ENCODE measurements at regions of chr1 and their contacts with region 1.

Region 1: DNA sequence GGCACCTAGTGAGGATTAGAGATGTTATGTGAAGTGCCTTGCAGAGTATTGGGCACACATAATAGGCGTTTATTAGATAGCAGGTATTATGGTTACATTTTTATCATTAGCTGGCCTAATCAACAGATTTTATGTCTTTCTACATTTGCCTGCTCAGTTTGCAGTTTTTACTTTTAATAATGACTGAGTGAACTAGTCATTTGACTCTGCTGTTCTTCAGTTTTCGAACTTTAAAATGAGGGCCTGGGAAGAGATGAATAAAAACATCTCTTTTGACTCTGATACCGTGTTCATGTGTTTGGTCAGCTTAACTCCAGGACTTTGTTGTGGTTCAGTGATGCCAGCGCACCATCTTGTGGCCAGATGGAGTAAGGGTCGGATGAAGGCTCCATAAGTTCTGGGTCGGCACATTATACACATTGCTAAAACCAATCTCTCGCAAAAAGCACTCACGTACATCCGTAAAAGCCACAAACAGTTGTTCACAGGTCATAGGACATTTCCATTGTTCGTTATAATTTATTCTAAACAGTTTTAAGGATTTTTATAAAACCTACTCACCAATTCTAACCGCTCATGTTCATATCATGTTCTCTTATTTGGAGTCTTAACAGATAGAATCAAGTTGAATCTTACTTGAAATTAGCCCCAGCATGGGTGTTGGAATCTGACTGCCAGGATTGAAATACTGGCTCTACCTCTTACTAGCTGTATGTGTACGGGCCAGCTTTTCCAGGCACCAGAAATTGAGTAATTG is 78.4 kb upstream of the GPR88 start:
- DNase-seq: peak; percentile 42 to 85 (median 61)
- ATAC-seq: peak; percentile 69
- H3K4me3 ChIP-seq: no peak overlapping the region
- H3K4me3 Mint-ChIP-seq: peak overlapping the region; percentile 8
- H3K27ac ChIP-seq: no peak overlapping the region
- H3K27ac Mint-ChIP-seq: peak overlapping the region; percentile 29
- H3K4me1 ChIP-seq: peaks cover 17% of the 10 kb centered on the region
- H3K4me1 Mint-ChIP-seq: peaks cover 55% of the 10 kb centered on the region
- H3K27me3 ChIP-seq: no peaks in the 10 kb centered on the region
- H3K27me3 Mint-ChIP-seq: no peaks in the 10 kb centered on the region
- CTCF ChIP-seq: peak; percentile 57

Region 2: GRCh38 chr1:99808391-99809115 is 651.0 kb before region 1 on chr1:
- CTCF ChIA-PET with region 1: interaction called, 3 read pairs
- POLR2A ChIA-PET with region 1: no interaction called
- intact Hi-C with region 1: loop called (anchors 2 to 5 kb)
- DNase-seq: peak in 4 of 9 experiments; percentile 15 to 81 (median 54)
- ATAC-seq: peak; percentile 79
- H3K4me3 ChIP-seq: no peak overlapping the region
- H3K4me3 Mint-ChIP-seq: no peak overlapping the region
- H3K27ac ChIP-seq: no peak overlapping the region
- H3K27ac Mint-ChIP-seq: no peak overlapping the region
- H3K4me1 ChIP-seq: no peaks in the 10 kb centered on the region
- H3K4me1 Mint-ChIP-seq: peaks cover 4% of the 10 kb centered on the region
- H3K27me3 ChIP-seq: peaks cover 0 to 2% of the 10 kb centered on the region in 2 experiments
- H3K27me3 Mint-ChIP-seq: peaks cover 3% of the 10 kb centered on the region
- CTCF ChIP-seq: peak; percentile 85

Region 3: GRCh38 chr1:100229681-100230443 is 229.7 kb before region 1 on chr1:
- CTCF ChIA-PET with region 1: interaction called, 3 read pairs
- POLR2A ChIA-PET with region 1: no interaction called
- intact Hi-C with region 1: loop called in 1 of 2 experiments (anchors 5 kb)
- DNase-seq: no peak
- ATAC-seq: no peak
- H3K4me3 ChIP-seq: no peak overlapping the region
- H3K4me3 Mint-ChIP-seq: no peak overlapping the region
- H3K27ac ChIP-seq: no peak overlapping the region
- H3K27ac Mint-ChIP-seq: no peak overlapping the region
- H3K4me1 ChIP-seq: no peaks in the 10 kb centered on the region
- H3K4me1 Mint-ChIP-seq: peaks cover 2% of the 10 kb centered on the region
- H3K27me3 ChIP-seq: no peaks in the 10 kb centered on the region
- H3K27me3 Mint-ChIP-seq: no peaks in the 10 kb centered on the region
- CTCF ChIP-seq: no peak

Region 4: GRCh38 chr1:100292711-100293110 is 166.8 kb before region 1 on chr1:
- CTCF ChIA-PET with region 1: interaction called, 15 read pairs
- POLR2A ChIA-PET with region 1: no interaction called
- intact Hi-C with region 1: loop called in 1 of 2 experiments (anchors 5 kb)
- DNase-seq: no peak
- ATAC-seq: no peak
- H3K4me3 ChIP-seq: no peak overlapping the region
- H3K4me3 Mint-ChIP-seq: no peak overlapping the region
- H3K27ac ChIP-seq: no peak overlapping the region
- H3K27ac Mint-ChIP-seq: peak overlapping the region; percentile 3
- H3K4me1 ChIP-seq: no peaks in the 10 kb centered on the region
- H3K4me1 Mint-ChIP-seq: no peaks in the 10 kb centered on the region
- H3K27me3 ChIP-seq: no peaks in the 10 kb centered on the region
- H3K27me3 Mint-ChIP-seq: no peaks in the 10 kb centered on the region
- CTCF ChIP-seq: no peak

Region 5: DNA sequence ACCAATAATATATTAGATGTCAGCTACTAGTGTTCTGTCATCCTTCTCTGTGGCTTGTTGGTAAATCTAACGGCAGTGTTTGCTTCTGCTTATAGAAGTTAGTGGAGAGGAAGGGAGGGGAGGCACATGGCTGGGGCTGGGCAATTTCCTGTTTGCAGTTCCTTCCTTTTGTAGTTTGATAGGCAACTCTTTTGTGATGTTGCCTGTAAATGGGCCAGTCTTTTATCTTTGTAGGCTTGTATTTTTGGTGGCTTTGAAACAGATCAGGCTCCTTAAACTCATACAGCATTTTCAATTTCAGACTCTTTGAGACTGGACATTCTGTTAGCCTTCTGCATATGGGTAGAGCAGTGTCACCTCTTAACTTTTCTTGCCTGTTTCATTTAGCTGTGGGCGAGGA is 59.1 kb before region 1 on chr1:
- CTCF ChIA-PET with region 1: interaction called, 16 read pairs
- POLR2A ChIA-PET with region 1: interaction called, 3 read pairs
- intact Hi-C with region 1: loop called in 1 of 2 experiments (anchors 2 kb)
- DNase-seq: peak; percentile 39 to 90 (median 66)
- ATAC-seq: peak; percentile 82
- H3K4me3 ChIP-seq: peak overlapping the region; percentile 13 to 19
- H3K4me3 Mint-ChIP-seq: peak overlapping the region; percentile 73
- H3K27ac ChIP-seq: peak overlapping the region; percentile 59 to 80
- H3K27ac Mint-ChIP-seq: peak overlapping the region; percentile 92
- H3K4me1 ChIP-seq: peaks cover 93% of the 10 kb centered on the region
- H3K4me1 Mint-ChIP-seq: peaks cover 86% of the 10 kb centered on the region
- H3K27me3 ChIP-seq: no peaks in the 10 kb centered on the region
- H3K27me3 Mint-ChIP-seq: no peaks in the 10 kb centered on the region
- CTCF ChIP-seq: no peak

Region 6: DNA sequence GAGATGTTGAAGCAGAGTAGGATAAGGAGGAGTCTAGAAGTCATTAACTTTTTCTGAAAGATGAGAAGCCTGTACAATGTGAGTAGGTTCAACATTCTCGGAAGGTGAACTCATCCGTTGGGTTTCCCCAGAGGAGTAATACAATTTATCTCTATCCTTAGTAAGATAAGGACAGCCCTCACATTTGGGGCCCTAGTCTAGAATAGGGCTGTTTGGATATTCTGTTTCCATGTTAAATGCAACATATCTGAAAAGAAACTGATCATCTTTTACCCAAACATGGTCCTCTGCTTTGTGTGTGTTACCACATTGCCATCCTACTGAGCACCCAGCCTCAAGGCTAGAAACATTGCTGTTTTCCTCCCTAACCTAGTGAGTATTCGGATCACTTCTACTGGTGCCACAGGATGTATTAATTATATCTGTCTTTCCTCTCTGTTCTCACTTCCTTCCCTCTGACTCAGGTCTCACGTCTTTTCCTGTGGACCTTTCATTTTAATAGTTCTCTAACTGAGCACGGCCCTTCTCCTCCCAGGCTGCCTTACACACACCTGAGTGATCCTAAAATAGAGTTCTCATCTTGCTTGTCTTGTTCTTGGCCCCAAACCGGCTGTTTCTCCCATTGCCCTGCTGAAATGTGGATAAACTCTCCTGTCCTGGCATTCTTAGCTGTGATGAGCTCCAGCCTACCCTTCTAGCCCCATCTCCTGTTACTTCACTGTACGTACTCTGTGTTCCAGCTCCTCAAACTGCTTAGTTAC is 15.5 kb before region 1 on chr1:
- CTCF ChIA-PET with region 1: interaction called, 38 read pairs
- POLR2A ChIA-PET with region 1: interaction called, 4 read pairs
- intact Hi-C with region 1: loop called in 1 of 2 experiments (anchors 1 kb)
- DNase-seq: peak in 5 of 9 experiments; percentile 18 to 75 (median 39)
- ATAC-seq: peak; percentile 35
- H3K4me3 ChIP-seq: peak overlapping the region in 1 of 2 experiments; percentile 25
- H3K4me3 Mint-ChIP-seq: peak overlapping the region; percentile 71
- H3K27ac ChIP-seq: peak overlapping the region; percentile 73 to 88
- H3K27ac Mint-ChIP-seq: peak overlapping the region; percentile 97
- H3K4me1 ChIP-seq: peaks cover 71% of the 10 kb centered on the region
- H3K4me1 Mint-ChIP-seq: peaks cover 84% of the 10 kb centered on the region
- H3K27me3 ChIP-seq: no peaks in the 10 kb centered on the region
- H3K27me3 Mint-ChIP-seq: no peaks in the 10 kb centered on the region
- CTCF ChIP-seq: no peak